ENCODE measurements at regions of chr7 and their contacts with region 1.

Region 1: GRCh38 chr7:128904381-128905197 is 5.9 kb downstream of the KCP start:
- H3K4me3 Mint-ChIP-seq: no peak overlapping the region
- H3K27ac Mint-ChIP-seq: peak overlapping the region; percentile 54
- H3K4me1 Mint-ChIP-seq: peaks cover 34% of the 10 kb centered on the region
- H3K27me3 Mint-ChIP-seq: peaks cover 31% of the 10 kb centered on the region

Region 2: DNA sequence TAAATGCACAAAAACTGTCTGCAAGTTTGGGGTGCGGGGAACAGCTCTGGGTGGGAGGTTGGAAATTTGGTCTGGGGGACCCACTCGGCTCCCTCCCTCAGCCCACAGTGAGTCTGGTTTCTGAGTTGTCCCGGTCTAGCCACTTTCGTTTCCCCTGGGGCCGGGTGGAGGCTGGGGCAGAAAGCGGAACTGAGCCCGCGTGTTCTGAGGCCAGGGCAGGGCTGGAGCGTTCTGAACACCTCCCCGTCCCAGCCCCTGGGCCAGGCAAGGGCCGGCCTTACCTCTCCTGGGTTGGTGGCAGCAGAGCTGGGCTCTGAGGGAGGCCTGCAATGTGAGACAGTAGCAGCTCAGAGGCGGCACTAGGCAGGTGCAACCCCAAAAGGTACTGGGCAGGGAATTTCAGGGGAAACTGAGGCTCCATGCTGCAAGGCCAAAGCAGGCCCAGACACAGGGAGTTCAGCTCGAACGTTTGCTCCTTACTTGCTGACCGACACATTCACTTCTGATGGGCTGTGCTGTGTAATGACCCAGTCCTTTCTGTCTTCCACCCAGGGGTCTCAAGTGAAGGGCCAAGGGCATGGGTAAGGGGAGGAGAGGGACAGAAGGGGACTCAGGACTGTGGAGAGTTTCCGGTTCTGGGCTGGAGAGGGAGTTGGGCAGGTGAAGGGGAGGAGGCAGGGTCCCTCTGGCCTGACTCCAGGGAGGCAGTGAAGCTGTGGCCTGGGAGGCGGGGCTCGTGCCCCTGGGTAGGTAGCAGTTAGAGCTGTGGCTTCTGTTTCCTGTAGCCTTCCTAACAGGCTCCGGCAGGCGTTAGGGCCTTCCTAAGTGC is 36.1 kb after region 1 on chr7:
- intact Hi-C with region 1: loop called (anchors 2 kb)
- H3K4me3 Mint-ChIP-seq: peak overlapping the region; percentile 98
- H3K27ac Mint-ChIP-seq: peak overlapping the region; percentile 96
- H3K4me1 Mint-ChIP-seq: peaks cover 58% of the 10 kb centered on the region
- H3K27me3 Mint-ChIP-seq: no peaks in the 10 kb centered on the region

Region 3: DNA sequence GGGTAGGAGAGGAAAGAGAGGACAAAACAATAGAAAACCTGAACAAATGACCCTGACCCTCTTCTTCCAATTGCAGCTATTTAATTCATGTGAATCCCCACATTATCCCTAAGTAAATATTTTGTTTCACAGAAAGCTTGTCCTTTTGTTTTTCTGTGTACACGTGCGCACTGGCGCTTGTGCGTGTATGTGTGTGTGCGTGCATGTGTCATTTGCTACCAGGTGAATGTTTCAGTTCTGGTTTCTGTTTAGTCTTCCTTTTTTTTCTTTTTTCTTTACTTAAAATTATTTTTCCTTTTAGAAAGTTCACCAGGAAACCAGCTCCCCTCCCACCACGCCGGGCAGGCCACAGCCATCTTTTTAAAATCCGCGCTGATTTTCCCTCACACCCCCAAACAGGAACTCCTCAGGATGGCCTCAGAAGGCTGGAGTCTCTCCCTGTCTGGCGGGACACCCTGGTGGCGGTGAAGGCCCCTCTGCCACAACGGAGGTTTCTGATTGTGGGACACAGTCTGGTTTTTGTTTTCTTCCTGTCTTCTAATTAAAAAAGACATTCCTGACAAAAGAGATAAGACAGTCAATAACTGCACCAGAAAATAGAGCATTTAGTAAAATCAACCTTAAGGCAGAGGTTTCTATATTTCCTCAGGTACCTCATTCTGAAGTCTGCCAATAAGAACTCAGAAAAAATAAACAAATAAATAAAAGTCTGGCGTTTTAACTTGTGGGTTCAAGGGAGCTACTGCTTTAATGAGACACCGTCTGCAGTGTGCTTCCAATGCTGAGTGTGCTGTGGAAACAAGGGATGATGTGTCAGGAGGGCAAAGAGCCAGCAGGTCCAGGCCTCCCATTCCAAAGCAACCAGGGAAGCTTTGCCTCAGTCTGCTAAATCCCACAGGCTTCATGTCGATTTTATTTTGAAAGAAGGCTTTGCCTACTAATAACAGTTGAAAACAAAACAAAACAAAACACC is 50.5 kb after region 1 on chr7:
- intact Hi-C with region 1: loop called (anchors 2 kb)
- H3K4me3 Mint-ChIP-seq: no peak overlapping the region
- H3K27ac Mint-ChIP-seq: peak overlapping the region; percentile 24
- H3K4me1 Mint-ChIP-seq: peaks cover 44% of the 10 kb centered on the region
- H3K27me3 Mint-ChIP-seq: no peaks in the 10 kb centered on the region

Region 4: GRCh38 chr7:129210256-129210988 is 305.8 kb after region 1 on chr7:
- intact Hi-C with region 1: loop called (anchors 5 kb)
- H3K4me3 Mint-ChIP-seq: no peak overlapping the region
- H3K27ac Mint-ChIP-seq: no peak overlapping the region
- H3K4me1 Mint-ChIP-seq: peaks cover 18% of the 10 kb centered on the region
- H3K27me3 Mint-ChIP-seq: peaks cover 7% of the 10 kb centered on the region